A549 (cell line): ENCODE measurements at regions of chr16 and their contacts with region 1.

Region 1: DNA sequence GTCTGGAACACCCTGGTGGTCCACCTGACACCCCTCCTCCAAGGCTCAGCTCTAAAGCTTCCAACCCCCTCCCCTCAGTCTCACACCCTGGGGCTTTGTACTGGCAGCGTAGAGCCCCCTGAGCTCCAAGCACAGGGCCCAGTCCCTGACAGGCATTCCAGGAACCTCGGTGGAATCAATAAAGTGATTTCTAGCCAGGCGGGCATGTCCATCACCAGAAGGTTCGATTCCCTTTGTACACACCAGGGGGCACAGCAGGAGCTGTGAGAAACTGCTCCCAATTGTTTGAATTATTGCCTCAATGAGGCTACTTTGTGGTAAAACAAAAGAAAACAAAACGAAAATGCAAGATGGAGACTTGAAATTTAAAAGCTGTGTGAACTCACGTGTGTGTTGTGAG is 51.8 kb downstream of the SMPD3 start:
- DNase-seq: peak; percentile 32
- ATAC-seq: peak; percentile 26 to 71; a peak in 3 of 6 replicates
- H3K4me3 ChIP-seq: no peak overlapping the region
- H3K27ac ChIP-seq: no peak overlapping the region
- H3K4me1 ChIP-seq: no peaks in the 10 kb centered on the region
- CTCF ChIP-seq: peak; percentile 24; the same call in 2 of the 3 replicates
- EP300 ChIP-seq: no peak
- POLR2A ChIP-seq: no peak
- RAD21 ChIP-seq: peak; percentile 36 to 41; a peak in 2 of 5 replicates

Region 2: DNA sequence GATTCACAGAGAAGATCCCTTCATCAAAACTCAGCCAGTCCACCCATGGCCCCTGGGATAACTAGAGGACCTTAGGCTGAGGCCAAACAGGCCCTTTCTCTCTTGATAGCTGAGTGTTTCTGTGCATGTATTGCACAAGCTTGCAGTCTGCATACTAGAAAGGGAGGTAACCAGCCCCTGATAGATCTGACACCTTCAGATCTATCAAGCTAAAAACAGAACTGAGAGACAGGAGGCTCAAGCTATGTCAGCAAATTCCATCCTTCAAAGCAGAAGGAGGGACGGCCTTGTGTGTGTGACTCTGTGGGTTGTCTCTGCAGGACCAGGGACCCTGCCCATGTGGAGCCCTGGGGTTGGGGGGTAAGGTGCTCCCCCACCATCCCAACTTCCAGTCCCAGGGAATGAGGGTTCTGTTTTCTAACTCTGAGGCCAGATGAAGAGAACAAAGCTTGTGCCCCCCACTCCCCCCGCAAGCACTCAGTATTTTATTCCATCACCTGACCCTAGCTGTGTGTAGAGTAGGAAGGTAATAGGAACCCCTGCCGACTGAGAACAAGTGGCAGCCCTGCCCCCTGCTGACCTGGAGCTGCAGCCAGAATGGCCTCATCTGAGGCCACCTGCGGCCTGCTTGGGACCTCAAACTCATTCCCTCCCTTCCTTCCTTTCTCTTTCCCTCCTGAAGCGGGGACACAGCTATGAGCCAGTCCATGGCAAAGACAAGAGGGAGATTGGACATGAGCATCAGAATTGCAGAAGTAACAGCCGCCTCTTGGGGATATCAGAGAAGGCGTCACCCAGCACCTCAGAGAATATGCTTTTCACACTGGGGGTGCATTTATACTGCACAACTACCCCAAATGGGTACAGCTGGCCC is 12.0 kb before region 1 on chr16:
- CTCF ChIA-PET with region 1: interaction called, 11 read pairs
- POLR2A ChIA-PET with region 1: no interaction called
- DNase-seq: no peak
- ATAC-seq: no peak
- H3K4me3 ChIP-seq: no peak overlapping the region
- H3K27ac ChIP-seq: no peak overlapping the region
- H3K4me1 ChIP-seq: no peaks in the 10 kb centered on the region
- CTCF ChIP-seq: no peak
- EP300 ChIP-seq: no peak
- POLR2A ChIP-seq: no peak
- RAD21 ChIP-seq: no peak

Region 3: GRCh38 chr16:68406451-68407152 is 10.1 kb after region 1 on chr16:
- CTCF ChIA-PET with region 1: interaction called, 16 read pairs
- POLR2A ChIA-PET with region 1: no interaction called
- DNase-seq: no peak
- ATAC-seq: peak in 1 of 2 experiments; percentile 39; a peak in 2 of 6 replicates
- H3K4me3 ChIP-seq: no peak overlapping the region
- H3K27ac ChIP-seq: no peak overlapping the region
- H3K4me1 ChIP-seq: 0 out of 3 replicates have a peak, but pooled peaks cover 5% of the 10 kb centered on the region
- CTCF ChIP-seq: no peak
- EP300 ChIP-seq: no peak
- POLR2A ChIP-seq: no peak
- RAD21 ChIP-seq: no peak

Region 4: GRCh38 chr16:68436581-68436980 is 40.1 kb after region 1 on chr16:
- CTCF ChIA-PET with region 1: no interaction called
- POLR2A ChIA-PET with region 1: no interaction called
- DNase-seq: peak in 1 of 2 experiments; percentile 55
- ATAC-seq: no peak; a peak in 1 of 6 replicates
- H3K4me3 ChIP-seq: no peak overlapping the region
- H3K27ac ChIP-seq: no peak overlapping the region
- H3K4me1 ChIP-seq: no peaks in the 10 kb centered on the region
- CTCF ChIP-seq: no peak
- EP300 ChIP-seq: no peak
- POLR2A ChIP-seq: no peak
- RAD21 ChIP-seq: no peak

Region 5: GRCh38 chr16:68512183-68512582 is 115.7 kb after region 1 on chr16:
- CTCF ChIA-PET with region 1: interaction called, 11 read pairs
- POLR2A ChIA-PET with region 1: no interaction called
- DNase-seq: no peak
- ATAC-seq: no peak
- H3K4me3 ChIP-seq: no peak overlapping the region
- H3K27ac ChIP-seq: no peak overlapping the region
- H3K4me1 ChIP-seq: no peaks in the 10 kb centered on the region
- CTCF ChIP-seq: no peak
- EP300 ChIP-seq: no peak
- POLR2A ChIP-seq: no peak
- RAD21 ChIP-seq: no peak